A549 (cell line): ENCODE measurements at regions of chr2 and their contacts with region 1.

Region 1: GRCh38 chr2:10141736-10142642 is 19.4 kb downstream of the RRM2 start:
- DNase-seq: peak in 1 of 2 experiments; percentile 58
- ATAC-seq: peak; percentile 76 to 86
- H3K4me3 ChIP-seq: no peak overlapping the region
- H3K27ac ChIP-seq: no peak overlapping the region
- H3K4me1 ChIP-seq: peaks cover 7% of the 10 kb centered on the region
- CTCF ChIP-seq: peak; percentile 68
- EP300 ChIP-seq: no peak
- POLR2A ChIP-seq: no peak
- RAD21 ChIP-seq: peak; percentile 79 to 80

Region 2: DNA sequence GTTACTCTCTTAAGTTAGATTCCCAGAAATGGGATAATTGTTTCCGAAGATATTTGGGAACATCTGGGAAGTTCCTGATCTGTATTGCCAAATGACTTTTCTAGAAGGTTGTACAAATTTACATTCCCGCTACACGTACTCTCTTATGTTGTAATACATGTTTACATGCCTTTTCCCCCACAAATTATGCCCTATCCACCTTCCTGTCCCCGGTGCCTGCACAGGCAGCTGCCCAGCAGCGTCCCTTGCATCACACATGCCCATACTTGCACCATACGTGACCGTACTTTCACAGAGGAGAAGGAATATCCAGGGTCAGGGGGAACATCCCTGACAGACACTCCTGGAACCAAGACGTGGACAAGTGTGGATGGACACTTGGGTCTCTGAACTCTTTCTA is 122.8 kb before region 1 on chr2:
- CTCF ChIA-PET with region 1: no interaction called
- POLR2A ChIA-PET with region 1: no interaction called
- DNase-seq: no peak
- ATAC-seq: no peak
- H3K4me3 ChIP-seq: no peak overlapping the region
- H3K27ac ChIP-seq: no peak overlapping the region
- H3K4me1 ChIP-seq: no peaks in the 10 kb centered on the region
- CTCF ChIP-seq: no peak
- EP300 ChIP-seq: no peak
- POLR2A ChIP-seq: no peak
- RAD21 ChIP-seq: no peak

Region 3: DNA sequence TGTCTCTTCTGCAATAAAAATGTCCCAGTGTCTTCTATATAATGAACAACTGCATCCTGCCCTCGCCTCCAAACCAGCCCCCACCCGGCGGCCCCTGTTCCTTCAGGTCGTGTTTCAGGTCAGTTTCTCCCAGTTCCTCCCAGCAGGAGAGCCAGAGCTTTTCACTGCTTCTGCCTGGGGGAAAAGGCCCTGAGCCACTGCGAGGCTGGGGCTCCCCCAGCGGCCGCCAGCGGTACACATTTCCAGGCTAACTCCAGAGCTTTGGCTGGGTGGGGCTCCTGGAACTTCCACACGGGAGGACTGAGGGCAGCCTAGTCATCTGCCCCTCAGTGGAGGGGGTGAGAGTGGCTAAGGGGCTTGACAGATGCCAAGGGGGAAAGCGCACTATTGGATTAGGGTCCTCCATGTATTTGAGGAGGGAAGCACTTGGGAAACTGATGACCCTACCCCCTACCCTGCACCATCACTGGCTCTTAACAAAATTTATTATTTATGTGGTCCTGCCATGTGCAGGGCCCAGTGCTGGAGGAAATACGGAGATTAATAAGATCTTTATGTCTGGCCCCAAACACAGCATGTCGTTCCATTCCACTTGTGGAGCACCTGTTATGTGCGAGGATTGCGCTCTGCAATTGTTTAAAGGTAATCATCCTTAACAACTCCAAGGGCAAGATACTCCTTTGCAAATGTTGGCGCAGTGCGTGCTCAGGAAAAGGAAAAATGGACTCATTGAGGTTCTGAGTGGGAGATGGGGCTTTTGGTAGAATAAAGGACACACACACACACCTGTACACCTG is 44.4 kb before region 1 on chr2:
- CTCF ChIA-PET with region 1: interaction called, 10 read pairs
- POLR2A ChIA-PET with region 1: no interaction called
- DNase-seq: peak; percentile 70 to 97
- ATAC-seq: peak; percentile 97 to 99
- H3K4me3 ChIP-seq: no peak overlapping the region
- H3K27ac ChIP-seq: no peak overlapping the region
- H3K4me1 ChIP-seq: peaks cover 5% of the 10 kb centered on the region
- CTCF ChIP-seq: peak; percentile 88
- EP300 ChIP-seq: no peak
- POLR2A ChIP-seq: no peak
- RAD21 ChIP-seq: peak; percentile 81 to 86

Region 4: DNA sequence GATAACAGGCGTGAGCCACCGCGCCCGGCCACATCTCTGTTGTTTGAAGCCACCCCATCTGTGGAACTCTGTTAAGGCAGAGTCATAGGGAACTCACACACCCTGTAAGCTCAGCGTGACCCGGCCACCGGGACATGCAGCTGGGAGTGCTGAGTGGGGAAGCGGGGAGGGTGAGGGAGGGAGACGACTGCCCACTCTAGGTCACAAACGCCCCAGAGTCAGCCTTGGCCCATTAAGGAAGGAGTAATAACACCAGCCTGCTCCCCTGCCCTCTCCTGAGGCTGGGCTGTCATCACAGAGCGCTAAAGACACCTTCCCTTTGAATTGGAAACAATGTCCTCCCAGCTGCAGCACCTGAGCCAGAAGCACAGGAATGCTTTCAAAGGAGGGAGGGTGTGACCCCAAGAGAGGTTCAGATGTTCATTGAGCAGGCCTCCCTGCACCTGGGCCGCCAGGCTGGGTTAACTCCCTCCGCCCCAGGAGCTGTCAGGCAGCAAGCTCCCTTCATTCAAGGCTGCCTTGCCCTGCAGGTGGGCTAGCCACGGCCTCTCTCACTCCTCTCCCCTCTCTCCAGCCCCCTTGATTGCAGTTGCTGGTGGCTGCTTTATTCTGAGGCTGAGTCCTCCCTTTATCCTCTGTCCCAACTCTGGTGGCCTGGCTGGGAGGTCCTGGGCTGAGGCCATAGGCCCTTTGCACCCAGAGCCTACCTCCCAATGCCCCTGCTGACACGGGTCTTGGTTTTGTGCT is 83.5 kb after region 1 on chr2:
- CTCF ChIA-PET with region 1: interaction called, 13 read pairs
- POLR2A ChIA-PET with region 1: no interaction called
- DNase-seq: no peak
- ATAC-seq: no peak; a peak in 1 of 6 replicates
- H3K4me3 ChIP-seq: no peak overlapping the region
- H3K27ac ChIP-seq: no peak overlapping the region
- H3K4me1 ChIP-seq: peaks cover 6% of the 10 kb centered on the region; the same call in 1 of the 3 replicates
- CTCF ChIP-seq: no peak
- EP300 ChIP-seq: no peak
- POLR2A ChIP-seq: no peak
- RAD21 ChIP-seq: no peak

Region 5: DNA sequence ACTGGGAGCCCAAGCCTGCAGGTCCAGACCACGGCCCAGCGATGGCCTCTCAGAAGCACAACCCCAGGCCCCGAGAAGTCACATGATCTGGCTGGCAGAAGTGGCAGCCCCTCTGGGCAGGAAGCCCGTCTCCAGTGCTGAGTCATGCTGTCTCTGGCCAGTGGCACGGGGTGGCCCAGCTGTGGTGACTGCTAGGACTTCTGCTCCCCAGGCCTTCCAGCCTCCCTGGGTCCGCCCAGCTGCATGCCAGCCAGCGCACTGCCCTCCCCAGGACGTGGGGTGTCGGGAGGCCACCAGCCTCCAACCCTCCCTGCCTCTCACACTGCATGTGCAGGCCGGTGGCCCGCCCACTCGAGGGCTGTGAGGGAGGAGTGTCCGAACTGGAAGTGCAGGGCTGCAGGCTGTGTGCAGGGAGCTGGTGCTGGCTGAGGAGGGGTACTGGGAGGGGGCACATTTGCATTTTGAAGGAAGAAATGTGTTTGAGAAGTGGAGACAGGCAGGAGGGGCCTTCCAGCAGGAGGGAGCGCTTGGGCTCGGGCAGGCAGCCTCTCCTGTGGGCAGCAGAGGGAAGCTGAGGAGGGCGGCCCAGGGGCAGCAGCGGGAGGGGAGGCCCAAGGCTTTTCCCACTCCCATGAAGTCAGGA is 143.7 kb after region 1 on chr2:
- CTCF ChIA-PET with region 1: interaction called, 13 read pairs
- POLR2A ChIA-PET with region 1: no interaction called
- DNase-seq: peak; percentile 86 to 90
- ATAC-seq: peak; percentile 54 to 76
- H3K4me3 ChIP-seq: no peak overlapping the region
- H3K27ac ChIP-seq: peak overlapping the region; percentile 87
- H3K4me1 ChIP-seq: peaks cover 67% of the 10 kb centered on the region
- CTCF ChIP-seq: no peak
- EP300 ChIP-seq: no peak
- POLR2A ChIP-seq: peak; percentile 35; the same call in 1 of the 2 replicates
- RAD21 ChIP-seq: peak in 1 of 2 experiments; percentile 33; a peak in 2 of 5 replicates

Region 6: GRCh38 chr2:10331027-10331701 is 189.2 kb after region 1 on chr2:
- CTCF ChIA-PET with region 1: interaction called, 13 read pairs
- POLR2A ChIA-PET with region 1: no interaction called
- DNase-seq: peak; percentile 36 to 81
- ATAC-seq: peak; percentile 58 to 78
- H3K4me3 ChIP-seq: peak overlapping the region; percentile 25; the same call in 2 of the 3 replicates
- H3K27ac ChIP-seq: peak overlapping the region; percentile 89 to 92
- H3K4me1 ChIP-seq: peaks cover 84% of the 10 kb centered on the region
- CTCF ChIP-seq: no peak
- EP300 ChIP-seq: no peak
- POLR2A ChIP-seq: no peak
- RAD21 ChIP-seq: peak in 1 of 2 experiments; percentile 36; a peak in 3 of 5 replicates